A549 (cell line): ENCODE measurements at regions of chr7 and their contacts with region 1.

Region 1: GRCh38 chr7:134514663-134515062 is 12.7 kb upstream of the AKR1B10 start:
- DNase-seq: peak; percentile 91 to 92
- ATAC-seq: peak; percentile 63 to 71
- H3K4me3 ChIP-seq: no peak overlapping the region
- H3K27ac ChIP-seq: peak overlapping the region; percentile 68 to 83
- H3K4me1 ChIP-seq: peaks cover 37% of the 10 kb centered on the region
- CTCF ChIP-seq: peak; percentile 97
- EP300 ChIP-seq: no peak
- POLR2A ChIP-seq: no peak
- RAD21 ChIP-seq: peak; percentile 71 to 82

Region 2: DNA sequence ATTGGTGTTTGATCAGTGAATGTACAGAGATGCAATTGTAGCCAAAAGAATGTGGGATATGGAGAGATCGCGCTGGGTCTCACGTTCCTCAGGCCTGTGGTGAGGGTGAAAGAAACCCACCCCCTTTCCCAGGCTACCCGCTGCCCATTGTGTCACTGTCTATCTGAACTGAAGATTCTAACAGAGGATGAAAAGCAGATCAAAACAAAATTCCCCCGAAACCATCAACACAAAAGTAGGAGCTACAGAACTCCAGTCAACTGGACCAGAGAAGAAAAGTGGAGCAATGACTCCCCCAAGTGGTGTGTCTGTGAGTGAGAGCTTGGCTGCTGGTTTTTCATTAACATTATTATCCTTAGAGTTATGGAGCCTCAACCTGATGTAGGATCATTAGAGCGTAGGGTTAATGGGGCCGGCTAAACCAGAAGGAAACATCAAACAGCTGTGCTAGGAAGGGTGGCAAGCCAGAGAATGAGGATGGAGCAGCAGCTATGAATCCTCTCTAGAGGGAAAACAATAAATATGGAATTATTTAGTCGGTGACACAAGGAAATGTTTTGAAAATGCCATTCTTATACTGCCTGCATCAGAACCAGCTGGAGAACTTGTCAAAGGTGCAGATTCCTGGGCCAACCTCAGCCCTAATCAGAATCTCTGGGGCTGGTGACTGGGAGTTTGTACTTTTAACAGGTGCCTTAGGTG is 94.1 kb before region 1 on chr7:
- CTCF ChIA-PET with region 1: interaction called, 566 read pairs
- POLR2A ChIA-PET with region 1: no interaction called
- DNase-seq: peak; percentile 88 to 92
- ATAC-seq: peak; percentile 78 to 86
- H3K4me3 ChIP-seq: no peak overlapping the region
- H3K27ac ChIP-seq: peak overlapping the region; percentile 79 to 87
- H3K4me1 ChIP-seq: peaks cover 64% of the 10 kb centered on the region
- CTCF ChIP-seq: peak; percentile 99
- EP300 ChIP-seq: no peak
- POLR2A ChIP-seq: no peak
- RAD21 ChIP-seq: peak; percentile 99 to 100

Region 3: GRCh38 chr7:134470864-134471263 is 43.8 kb before region 1 on chr7:
- CTCF ChIA-PET with region 1: interaction called, 486 read pairs
- POLR2A ChIA-PET with region 1: no interaction called
- DNase-seq: peak; percentile 70 to 74
- ATAC-seq: peak; percentile 45 to 66; a peak in 3 of 6 replicates
- H3K4me3 ChIP-seq: no peak overlapping the region
- H3K27ac ChIP-seq: peak overlapping the region; percentile 12 to 55; a peak in 5 of 6 replicates
- H3K4me1 ChIP-seq: peaks cover 41% of the 10 kb centered on the region
- CTCF ChIP-seq: no peak
- EP300 ChIP-seq: no peak
- POLR2A ChIP-seq: no peak
- RAD21 ChIP-seq: no peak

Region 4: GRCh38 chr7:134502463-134503371 is 11.9 kb before region 1 on chr7:
- CTCF ChIA-PET with region 1: interaction called, 49 read pairs
- POLR2A ChIA-PET with region 1: no interaction called
- DNase-seq: no peak
- ATAC-seq: no peak
- H3K4me3 ChIP-seq: no peak overlapping the region
- H3K27ac ChIP-seq: peak overlapping the region in 1 of 2 experiments; percentile 55; a peak in 3 of 6 replicates
- H3K4me1 ChIP-seq: 0 out of 3 replicates have a peak, but pooled peaks cover 9% of the 10 kb centered on the region
- CTCF ChIP-seq: no peak
- EP300 ChIP-seq: no peak
- POLR2A ChIP-seq: no peak
- RAD21 ChIP-seq: no peak

Region 5: GRCh38 chr7:134547397-134548054 is 32.9 kb after region 1 on chr7:
- CTCF ChIA-PET with region 1: interaction called, 914 read pairs
- POLR2A ChIA-PET with region 1: no interaction called
- DNase-seq: peak; percentile 85 to 97
- ATAC-seq: peak; percentile 54 to 74
- H3K4me3 ChIP-seq: peak overlapping the region; percentile 24
- H3K27ac ChIP-seq: peak overlapping the region; percentile 79 to 86
- H3K4me1 ChIP-seq: peaks cover 64% of the 10 kb centered on the region
- CTCF ChIP-seq: peak; percentile 100
- EP300 ChIP-seq: no peak
- POLR2A ChIP-seq: no peak
- RAD21 ChIP-seq: peak; percentile 84 to 86

Region 6: GRCh38 chr7:134599371-134599770 is 84.7 kb after region 1 on chr7:
- CTCF ChIA-PET with region 1: interaction called, 453 read pairs
- POLR2A ChIA-PET with region 1: no interaction called
- DNase-seq: no peak
- ATAC-seq: no peak
- H3K4me3 ChIP-seq: no peak overlapping the region
- H3K27ac ChIP-seq: peak overlapping the region in 1 of 2 experiments; percentile 54; a peak in 2 of 6 replicates
- H3K4me1 ChIP-seq: peaks cover 41% of the 10 kb centered on the region
- CTCF ChIP-seq: no peak
- EP300 ChIP-seq: no peak
- POLR2A ChIP-seq: no peak
- RAD21 ChIP-seq: no peak

Region 7: GRCh38 chr7:134619627-134620331 is 105.1 kb after region 1 on chr7:
- CTCF ChIA-PET with region 1: interaction called, 12 read pairs
- POLR2A ChIA-PET with region 1: no interaction called
- DNase-seq: peak in 1 of 2 experiments; percentile 66
- ATAC-seq: peak; percentile 83 to 86
- H3K4me3 ChIP-seq: no peak overlapping the region
- H3K27ac ChIP-seq: peak overlapping the region; percentile 44 to 54; a peak in 5 of 6 replicates
- H3K4me1 ChIP-seq: peaks cover 25% of the 10 kb centered on the region
- CTCF ChIP-seq: no peak
- EP300 ChIP-seq: no peak
- POLR2A ChIP-seq: no peak
- RAD21 ChIP-seq: no peak